ENCODE measurements at regions of chr5 and their contacts with region 1.

Region 1: GRCh38 chr5:130871346-130872086 is 293.5 kb downstream of the HINT1 start:
- DNase-seq: peak; percentile 57
- ATAC-seq: peak; percentile 71
- H3K4me3 Mint-ChIP-seq: no peak overlapping the region
- H3K27ac Mint-ChIP-seq: no peak overlapping the region
- H3K4me1 Mint-ChIP-seq: peaks cover 7% of the 10 kb centered on the region
- H3K27me3 Mint-ChIP-seq: no peaks in the 10 kb centered on the region

Region 2: DNA sequence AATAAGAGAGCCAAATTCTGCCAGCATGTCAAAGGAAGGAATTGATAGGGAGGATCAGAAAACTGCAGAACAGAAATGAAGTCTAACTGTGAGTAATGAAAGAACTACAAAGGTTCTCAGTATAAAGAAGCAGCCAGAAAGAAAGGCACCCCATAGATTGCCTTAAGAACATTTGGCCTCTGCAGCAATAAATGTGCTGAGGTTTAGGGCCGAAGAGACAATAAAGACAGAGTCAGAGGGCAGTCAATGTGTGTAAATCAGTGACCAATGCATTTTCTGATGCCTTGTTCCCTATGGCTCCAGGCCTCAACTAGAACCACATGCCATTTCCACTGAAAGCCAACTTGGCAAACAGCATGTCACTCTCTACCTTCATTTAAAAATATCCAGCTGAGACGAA is 12.5 kb after region 1 on chr5:
- CTCF ChIA-PET with region 1: interaction called, 12 read pairs
- POLR2A ChIA-PET with region 1: no interaction called
- intact Hi-C with region 1: no loop called
- DNase-seq: no peak
- ATAC-seq: no peak
- H3K4me3 Mint-ChIP-seq: no peak overlapping the region
- H3K27ac Mint-ChIP-seq: no peak overlapping the region
- H3K4me1 Mint-ChIP-seq: peaks cover 5% of the 10 kb centered on the region
- H3K27me3 Mint-ChIP-seq: peaks cover under 1% of the 10 kb centered on the region

Region 3: GRCh38 chr5:131068893-131069643 is 197.6 kb after region 1 on chr5:
- CTCF ChIA-PET with region 1: interaction called, 6 read pairs
- POLR2A ChIA-PET with region 1: no interaction called
- intact Hi-C with region 1: loop called in 1 of 2 experiments (anchors 5 kb)
- DNase-seq: peak; percentile 81
- ATAC-seq: peak; percentile 99
- H3K4me3 Mint-ChIP-seq: peak overlapping the region; percentile 16
- H3K27ac Mint-ChIP-seq: peak overlapping the region; percentile 95
- H3K4me1 Mint-ChIP-seq: peaks cover 50% of the 10 kb centered on the region
- H3K27me3 Mint-ChIP-seq: no peaks in the 10 kb centered on the region

Region 4: GRCh38 chr5:131109540-131110255 is 238.2 kb after region 1 on chr5:
- CTCF ChIA-PET with region 1: interaction called, 23 read pairs
- POLR2A ChIA-PET with region 1: no interaction called
- intact Hi-C with region 1: loop called (anchors 1 kb)
- DNase-seq: peak; percentile 30
- ATAC-seq: peak; percentile 79
- H3K4me3 Mint-ChIP-seq: no peak overlapping the region
- H3K27ac Mint-ChIP-seq: no peak overlapping the region
- H3K4me1 Mint-ChIP-seq: peaks cover 4% of the 10 kb centered on the region
- H3K27me3 Mint-ChIP-seq: no peaks in the 10 kb centered on the region

Region 5: GRCh38 chr5:131224387-131225201 is 353.1 kb after region 1 on chr5:
- CTCF ChIA-PET with region 1: no interaction called
- POLR2A ChIA-PET with region 1: no interaction called
- intact Hi-C with region 1: loop called in 1 of 2 experiments (anchors 10 kb)
- DNase-seq: peak; percentile 17
- ATAC-seq: peak; percentile 74
- H3K4me3 Mint-ChIP-seq: no peak overlapping the region
- H3K27ac Mint-ChIP-seq: no peak overlapping the region
- H3K4me1 Mint-ChIP-seq: peaks cover 9% of the 10 kb centered on the region
- H3K27me3 Mint-ChIP-seq: no peaks in the 10 kb centered on the region

Region 6: DNA sequence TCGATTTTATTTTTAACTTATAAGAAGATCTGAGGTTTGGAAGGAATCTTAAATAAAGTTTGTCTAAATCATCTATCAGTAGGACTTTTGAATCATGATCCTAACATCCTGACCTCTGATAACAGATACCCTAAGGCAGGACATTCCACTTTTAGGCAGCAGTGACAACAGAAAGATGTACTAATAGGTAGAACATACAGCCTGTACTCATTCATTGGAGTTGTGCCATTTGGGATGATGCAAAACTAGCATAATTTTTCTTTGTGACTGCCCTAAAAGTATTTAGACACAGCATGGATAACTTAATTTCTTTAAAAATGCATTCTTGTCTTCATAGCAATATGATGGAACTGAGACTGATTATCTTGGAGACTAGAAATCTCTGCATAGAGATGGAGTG is 432.0 kb after region 1 on chr5:
- CTCF ChIA-PET with region 1: no interaction called
- POLR2A ChIA-PET with region 1: no interaction called
- intact Hi-C with region 1: no loop called
- DNase-seq: no peak
- ATAC-seq: no peak
- H3K4me3 Mint-ChIP-seq: no peak overlapping the region
- H3K27ac Mint-ChIP-seq: peak overlapping the region; percentile 79
- H3K4me1 Mint-ChIP-seq: peaks cover 69% of the 10 kb centered on the region
- H3K27me3 Mint-ChIP-seq: no peaks in the 10 kb centered on the region